Activated T-helper 2 cell treated with anti-CD3 and anti-CD28 coated beads, Interferon-gamma antibody, Interleukin-2, Interleukin-4, amounts not matched to agents 10 μg/mL and 5 μg/mL and 100 μg/mL, durations not matched to agents 14 hours and 24 hours and 36 hours (primary cell): ENCODE measurements at regions of chr2 and their contacts with region 1.

Region 1: DNA sequence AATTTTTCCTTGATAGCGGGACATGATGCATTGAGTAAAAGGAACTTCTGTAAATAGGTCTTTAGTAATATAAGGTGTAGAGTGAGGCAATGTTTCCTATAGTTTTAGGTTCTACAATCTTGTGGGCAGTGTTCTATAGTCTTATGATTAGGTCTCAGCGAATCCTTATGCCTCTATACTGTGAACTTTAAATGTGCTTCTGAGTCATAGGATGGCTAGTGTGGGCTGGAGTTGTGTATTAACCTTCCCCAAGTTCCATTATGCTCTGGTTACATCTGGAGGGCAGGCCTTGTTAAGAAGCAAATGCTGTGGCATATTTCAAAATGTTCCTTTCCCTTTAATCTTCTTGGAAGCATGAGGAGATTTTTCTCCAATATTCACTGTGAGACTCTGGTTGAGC is 73.5 kb downstream of the ROCK2 start:
- DNase-seq: no peak
- H3K4me3 Mint-ChIP-seq: no peak overlapping the region
- H3K27ac Mint-ChIP-seq: peak overlapping the region; percentile 68
- H3K4me1 Mint-ChIP-seq: peaks cover 33% of the 10 kb centered on the region
- H3K27me3 Mint-ChIP-seq: no peaks in the 10 kb centered on the region

Region 2: GRCh38 chr2:11154923-11155380 is 115.9 kb before region 1 on chr2:
- intact Hi-C with region 1: loop called (anchors 5 kb)
- DNase-seq: peak; percentile 94
- H3K4me3 Mint-ChIP-seq: peak overlapping the region; percentile 83
- H3K27ac Mint-ChIP-seq: peak overlapping the region; percentile 75
- H3K4me1 Mint-ChIP-seq: peaks cover 9% of the 10 kb centered on the region
- H3K27me3 Mint-ChIP-seq: peaks cover 13% of the 10 kb centered on the region

Region 3: DNA sequence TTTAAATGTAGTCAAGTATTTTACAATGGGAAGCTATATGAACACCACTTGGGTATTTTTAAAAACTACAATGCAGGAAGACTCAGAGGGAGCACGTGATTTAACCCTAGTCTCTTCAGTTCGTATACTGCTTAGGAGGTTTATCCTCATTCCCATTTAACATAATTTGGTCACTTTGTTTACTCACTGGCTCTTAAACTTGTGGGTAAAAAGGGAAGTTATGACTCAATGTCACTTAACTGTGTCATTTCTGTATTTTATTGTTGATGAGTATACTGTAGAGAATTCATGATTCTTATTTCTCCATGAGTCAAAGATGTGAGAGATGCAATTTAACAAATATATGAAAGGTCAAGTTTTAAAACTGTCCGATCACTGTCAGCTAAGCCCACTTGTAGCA is 67.4 kb before region 1 on chr2:
- intact Hi-C with region 1: no loop called
- DNase-seq: no peak
- H3K4me3 Mint-ChIP-seq: no peak overlapping the region
- H3K27ac Mint-ChIP-seq: peak overlapping the region; percentile 55
- H3K4me1 Mint-ChIP-seq: peaks cover 19% of the 10 kb centered on the region
- H3K27me3 Mint-ChIP-seq: no peaks in the 10 kb centered on the region

Region 4: DNA sequence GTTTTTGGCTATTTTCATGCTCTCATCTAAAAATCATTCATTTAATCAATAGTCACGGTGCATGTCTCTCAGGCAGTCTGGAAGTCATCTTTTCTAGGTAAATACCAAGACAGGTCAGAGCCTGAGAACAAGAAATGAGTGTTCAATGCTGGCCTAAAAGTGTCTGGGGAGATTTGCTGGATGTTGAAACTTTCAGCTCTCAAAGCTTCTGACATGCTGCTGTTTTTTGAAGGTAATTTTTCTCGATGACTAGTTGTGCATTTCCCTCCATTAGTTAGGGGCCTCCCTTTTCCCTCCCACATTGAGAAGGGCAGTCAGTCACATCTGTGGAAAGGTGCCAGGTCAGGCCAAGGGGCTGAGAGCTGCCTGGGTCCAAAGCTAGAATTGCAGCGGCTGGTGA is 591.2 kb after region 1 on chr2:
- intact Hi-C with region 1: no loop called
- DNase-seq: no peak
- H3K4me3 Mint-ChIP-seq: no peak overlapping the region
- H3K27ac Mint-ChIP-seq: no peak overlapping the region
- H3K4me1 Mint-ChIP-seq: peaks cover 9% of the 10 kb centered on the region
- H3K27me3 Mint-ChIP-seq: peaks cover 11% of the 10 kb centered on the region